ENCODE measurements at regions of chr11 and their contacts with region 1.

Region 1: DNA sequence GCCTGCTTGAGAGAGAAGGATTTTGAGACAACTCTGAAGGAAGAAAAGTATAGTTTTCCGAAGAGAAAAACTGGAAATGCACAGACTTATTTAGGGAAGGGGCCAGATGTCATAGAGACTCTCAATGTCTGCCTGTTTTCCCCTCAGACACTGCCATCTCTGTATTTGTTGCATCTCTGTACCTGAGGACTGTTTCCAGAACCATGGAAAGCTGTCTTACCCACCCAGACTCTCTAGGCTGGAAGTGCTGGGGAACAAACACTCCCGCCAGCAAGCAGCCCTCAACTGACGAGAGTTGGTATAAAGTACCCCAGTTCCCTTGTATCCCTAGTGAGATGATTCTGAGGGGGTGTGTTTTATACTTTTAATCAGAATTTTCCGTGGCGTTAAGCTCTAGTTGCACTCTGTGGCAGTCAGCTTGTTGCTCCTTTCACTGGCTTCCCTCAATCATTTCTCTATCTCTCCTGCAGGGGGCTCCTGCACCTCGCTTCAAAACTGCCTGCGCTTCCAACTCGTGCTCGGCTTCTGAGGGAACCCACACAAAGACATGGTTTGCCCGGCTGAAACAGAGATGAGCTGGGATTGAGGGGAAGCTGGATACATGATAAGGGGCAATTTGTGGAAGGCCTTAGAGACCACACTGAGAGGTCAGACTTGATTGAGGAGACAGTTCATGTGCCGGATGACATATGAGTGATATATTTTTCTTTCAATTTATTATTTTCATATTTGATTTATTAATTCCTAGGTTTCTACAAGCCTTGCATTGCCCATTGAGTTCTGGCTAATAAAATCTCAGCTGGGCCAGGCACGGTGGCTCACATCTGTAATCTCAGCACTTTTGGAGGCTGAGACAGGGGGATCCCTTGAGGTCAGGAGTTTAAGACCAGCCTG is 36.9 kb upstream of the CLPB start:
- DNase-seq: peak; percentile 61
- ATAC-seq: peak; percentile 99
- H3K4me3 ChIP-seq: no peak overlapping the region; a peak in 1 of 4 replicates
- H3K27ac ChIP-seq: no peak overlapping the region
- H3K4me1 ChIP-seq: peaks cover 3 to 10% of the 10 kb centered on the region in 2 experiments; a peak in 3 of 4 replicates
- H3K27me3 ChIP-seq: peaks cover 3% of the 10 kb centered on the region; the same call in 1 of the 2 replicates
- CTCF ChIP-seq: peak; percentile 82 to 89 (median 87)
- POLR2A ChIP-seq: no peak
- RAD21 ChIP-seq: peak; percentile 84

Region 2: GRCh38 chr11:72391638-72392423 is 79.4 kb before region 1 on chr11:
- CTCF ChIA-PET with region 1: no interaction called
- POLR2A ChIA-PET with region 1: no interaction called
- RAD21 ChIA-PET with region 1: no interaction called
- intact Hi-C with region 1: no loop called
- DNase-seq: no peak
- ATAC-seq: no peak
- H3K4me3 ChIP-seq: no peak overlapping the region
- H3K27ac ChIP-seq: no peak overlapping the region
- H3K4me1 ChIP-seq: peaks cover 0 to 18% of the 10 kb centered on the region in 2 experiments; a peak in 1 of 4 replicates
- H3K27me3 ChIP-seq: no peaks in the 10 kb centered on the region
- CTCF ChIP-seq: no peak
- POLR2A ChIP-seq: no peak
- RAD21 ChIP-seq: no peak

Region 3: GRCh38 chr11:72483412-72484186 is 12.3 kb after region 1 on chr11:
- CTCF ChIA-PET with region 1: interaction called, 10 read pairs
- POLR2A ChIA-PET with region 1: interaction called, 3 read pairs
- RAD21 ChIA-PET with region 1: no interaction called
- intact Hi-C with region 1: no loop called
- DNase-seq: no peak
- ATAC-seq: no peak
- H3K4me3 ChIP-seq: no peak overlapping the region
- H3K27ac ChIP-seq: no peak overlapping the region
- H3K4me1 ChIP-seq: peaks cover 0 to 6% of the 10 kb centered on the region in 2 experiments; a peak in 1 of 4 replicates
- H3K27me3 ChIP-seq: no peaks in the 10 kb centered on the region
- CTCF ChIP-seq: no peak
- POLR2A ChIP-seq: no peak
- RAD21 ChIP-seq: no peak

Region 4: GRCh38 chr11:72553706-72554105 is 82.5 kb after region 1 on chr11:
- CTCF ChIA-PET with region 1: interaction called, 17 read pairs
- POLR2A ChIA-PET with region 1: no interaction called
- RAD21 ChIA-PET with region 1: interaction called in 1 of 2 experiments, 3 read pairs
- intact Hi-C with region 1: no loop called
- DNase-seq: no peak
- ATAC-seq: peak; percentile 70
- H3K4me3 ChIP-seq: no peak overlapping the region
- H3K27ac ChIP-seq: no peak overlapping the region
- H3K4me1 ChIP-seq: no peaks in the 10 kb centered on the region
- H3K27me3 ChIP-seq: peaks cover 17% of the 10 kb centered on the region
- CTCF ChIP-seq: peak; percentile 35 to 46 (median 39); a peak in 4 of 6 replicates
- POLR2A ChIP-seq: no peak
- RAD21 ChIP-seq: peak; percentile 58

Region 5: GRCh38 chr11:72585762-72586311 is 114.6 kb after region 1 on chr11:
- CTCF ChIA-PET with region 1: interaction called, 11 read pairs
- POLR2A ChIA-PET with region 1: no interaction called
- RAD21 ChIA-PET with region 1: interaction called, 4 to 5 read pairs
- intact Hi-C with region 1: no loop called
- DNase-seq: peak; percentile 38
- ATAC-seq: peak; percentile 94
- H3K4me3 ChIP-seq: no peak overlapping the region
- H3K27ac ChIP-seq: no peak overlapping the region
- H3K4me1 ChIP-seq: peaks cover 0 to 6% of the 10 kb centered on the region in 2 experiments; a peak in 1 of 4 replicates
- H3K27me3 ChIP-seq: no peaks in the 10 kb centered on the region
- CTCF ChIP-seq: peak; percentile 82 to 88 (median 85)
- POLR2A ChIP-seq: no peak
- RAD21 ChIP-seq: peak; percentile 86

Region 6: GRCh38 chr11:72683782-72684200 is 212.5 kb after region 1 on chr11:
- CTCF ChIA-PET with region 1: interaction called, 41 read pairs
- POLR2A ChIA-PET with region 1: no interaction called
- RAD21 ChIA-PET with region 1: interaction called, 4 to 5 read pairs
- intact Hi-C with region 1: loop called (anchors 5 kb)
- DNase-seq: no peak
- ATAC-seq: peak; percentile 74
- H3K4me3 ChIP-seq: no peak overlapping the region
- H3K27ac ChIP-seq: no peak overlapping the region
- H3K4me1 ChIP-seq: peaks cover 0 to 13% of the 10 kb centered on the region in 2 experiments; a peak in 3 of 4 replicates
- H3K27me3 ChIP-seq: peaks cover 17% of the 10 kb centered on the region
- CTCF ChIP-seq: peak; percentile 88 to 96 (median 96)
- POLR2A ChIP-seq: no peak
- RAD21 ChIP-seq: peak; percentile 88